Activated T-helper 2 cell treated with anti-CD3 and anti-CD28 coated beads, Interferon-gamma antibody, Interleukin-2, Interleukin-4, amounts not matched to agents 10 μg/mL and 5 μg/mL and 100 μg/mL, durations not matched to agents 14 hours and 24 hours and 36 hours (primary cell): ENCODE measurements at regions of chr11 and their contacts with region 1.

Region 1: GRCh38 chr11:74024261-74025029 is 15.6 kb upstream of the UCP3 start:
- DNase-seq: no peak
- H3K4me3 Mint-ChIP-seq: no peak overlapping the region
- H3K27ac Mint-ChIP-seq: peak overlapping the region; percentile 62
- H3K4me1 Mint-ChIP-seq: peaks cover 33% of the 10 kb centered on the region
- H3K27me3 Mint-ChIP-seq: no peaks in the 10 kb centered on the region

Region 2: GRCh38 chr11:73950869-73951710 is 73.4 kb before region 1 on chr11 and contains the start of gene DNAJB13:
- intact Hi-C with region 1: no loop called
- DNase-seq: no peak
- H3K4me3 Mint-ChIP-seq: no peak within 1 kb of the TSS
- H3K27ac Mint-ChIP-seq: no peak within 1 kb of the TSS
- H3K4me1 Mint-ChIP-seq: peaks cover under 1% of the 10 kb centered on the region
- H3K27me3 Mint-ChIP-seq: peaks cover 4% of the 10 kb centered on the region
- total RNA-seq, gene DNAJB13: 0.44 and 0.52 TPM in 2 replicates

Region 3: DNA sequence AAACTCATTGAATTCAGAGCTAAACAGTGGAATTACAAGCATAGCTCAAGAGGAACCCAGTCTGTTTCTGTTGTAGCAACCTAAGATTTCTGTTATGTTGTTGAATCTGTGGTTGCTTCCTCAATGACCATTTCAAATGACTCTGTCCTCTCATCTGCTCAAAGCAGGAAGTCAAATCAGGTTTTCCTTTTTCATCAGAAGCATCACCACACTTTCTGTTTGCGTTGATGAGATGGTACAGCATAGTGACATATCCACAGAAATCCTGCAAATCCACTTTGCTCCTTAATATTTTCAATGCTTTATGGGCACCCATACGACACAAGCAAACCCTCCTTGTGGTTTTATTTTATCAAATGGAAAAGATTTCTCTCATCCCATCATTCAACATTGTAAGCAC is 29.2 kb before region 1 on chr11:
- intact Hi-C with region 1: loop called (anchors 1 kb)
- DNase-seq: no peak
- H3K4me3 Mint-ChIP-seq: peak overlapping the region; percentile 37
- H3K27ac Mint-ChIP-seq: peak overlapping the region; percentile 96
- H3K4me1 Mint-ChIP-seq: peaks cover 45% of the 10 kb centered on the region
- H3K27me3 Mint-ChIP-seq: no peaks in the 10 kb centered on the region

Region 4: DNA sequence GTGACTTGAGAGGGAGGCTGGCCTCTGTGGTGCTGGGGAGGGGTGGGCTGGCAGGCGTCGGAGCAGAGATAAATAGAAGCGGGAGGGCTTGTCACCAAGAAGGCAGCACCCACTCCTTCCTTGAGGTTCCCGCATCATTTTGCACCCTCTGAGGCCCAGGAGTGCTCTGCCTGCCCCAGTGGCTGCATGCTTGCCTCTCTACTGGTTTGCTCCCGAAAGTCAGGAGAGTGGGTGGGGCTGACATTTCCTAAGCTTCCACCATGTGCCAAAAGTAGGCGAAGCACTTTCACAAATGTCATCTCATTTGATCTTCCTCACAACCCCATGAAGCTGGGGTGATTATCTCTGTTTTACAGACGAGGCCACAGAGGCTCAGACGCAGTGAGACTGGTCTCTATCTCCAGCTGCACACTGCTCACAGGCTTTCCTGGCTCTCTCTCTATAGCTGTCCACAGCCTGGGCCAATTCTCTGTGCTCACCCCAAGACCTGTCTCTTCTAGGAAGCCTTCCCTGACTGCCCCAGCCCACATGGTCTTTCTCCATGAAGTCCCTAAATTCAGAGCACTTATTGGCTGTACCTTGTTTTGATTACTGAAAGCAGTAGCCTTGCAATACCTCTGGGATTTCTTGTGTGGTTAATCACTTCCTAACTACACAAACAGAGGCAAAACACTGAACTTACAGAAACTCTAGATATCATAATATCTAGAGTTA is 12.9 kb before region 1 on chr11:
- intact Hi-C with region 1: loop called (anchors 1 kb)
- DNase-seq: peak; percentile 52
- H3K4me3 Mint-ChIP-seq: peak overlapping the region; percentile 7
- H3K27ac Mint-ChIP-seq: peak overlapping the region; percentile 99
- H3K4me1 Mint-ChIP-seq: peaks cover 78% of the 10 kb centered on the region
- H3K27me3 Mint-ChIP-seq: no peaks in the 10 kb centered on the region

Region 5: DNA sequence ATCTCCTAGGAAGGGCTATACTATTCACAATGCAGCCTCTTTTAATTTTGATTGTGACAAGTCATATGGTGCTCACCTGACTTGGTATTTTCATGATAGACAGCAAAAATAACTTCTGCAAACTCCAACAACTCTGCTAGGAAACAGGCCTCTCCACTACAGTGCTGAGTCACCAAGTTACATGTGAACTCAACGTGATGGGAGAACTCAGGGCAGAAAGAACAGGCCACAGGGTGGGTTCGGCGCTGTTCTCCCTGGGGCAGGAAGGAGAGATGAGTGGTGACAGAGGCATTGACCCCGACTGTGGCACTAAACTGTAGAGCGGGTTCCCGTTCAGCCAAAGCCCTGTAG is 61.1 kb after region 1 on chr11:
- intact Hi-C with region 1: loop called (anchors 5 kb)
- DNase-seq: no peak
- H3K4me3 Mint-ChIP-seq: no peak overlapping the region
- H3K27ac Mint-ChIP-seq: no peak overlapping the region
- H3K4me1 Mint-ChIP-seq: peaks cover 8% of the 10 kb centered on the region
- H3K27me3 Mint-ChIP-seq: no peaks in the 10 kb centered on the region

Region 6: GRCh38 chr11:74232311-74232950 is 208.0 kb after region 1 on chr11:
- intact Hi-C with region 1: loop called (anchors 5 kb)
- DNase-seq: no peak
- H3K4me3 Mint-ChIP-seq: no peak overlapping the region
- H3K27ac Mint-ChIP-seq: no peak overlapping the region
- H3K4me1 Mint-ChIP-seq: peaks cover 10% of the 10 kb centered on the region
- H3K27me3 Mint-ChIP-seq: no peaks in the 10 kb centered on the region